Activated CD8-positive, alpha-beta T cell treated with anti-CD3 and anti-CD28 coated beads, Interleukin-2, amount 10 ng/mL, durations not matched to agents 7 days and 5 days (primary cell): ENCODE measurements at regions of chr3 and their contacts with region 1.

Region 1: GRCh38 chr3:197960694-197961581 is 921 bp downstream of the LMLN start:
- DNase-seq: no peak
- ATAC-seq: no peak
- H3K4me3 Mint-ChIP-seq: peak overlapping the region; percentile 91
- H3K27ac Mint-ChIP-seq: peak overlapping the region; percentile 93
- H3K4me1 Mint-ChIP-seq: peaks cover 54% of the 10 kb centered on the region
- H3K27me3 Mint-ChIP-seq: no peaks in the 10 kb centered on the region

Region 2: DNA sequence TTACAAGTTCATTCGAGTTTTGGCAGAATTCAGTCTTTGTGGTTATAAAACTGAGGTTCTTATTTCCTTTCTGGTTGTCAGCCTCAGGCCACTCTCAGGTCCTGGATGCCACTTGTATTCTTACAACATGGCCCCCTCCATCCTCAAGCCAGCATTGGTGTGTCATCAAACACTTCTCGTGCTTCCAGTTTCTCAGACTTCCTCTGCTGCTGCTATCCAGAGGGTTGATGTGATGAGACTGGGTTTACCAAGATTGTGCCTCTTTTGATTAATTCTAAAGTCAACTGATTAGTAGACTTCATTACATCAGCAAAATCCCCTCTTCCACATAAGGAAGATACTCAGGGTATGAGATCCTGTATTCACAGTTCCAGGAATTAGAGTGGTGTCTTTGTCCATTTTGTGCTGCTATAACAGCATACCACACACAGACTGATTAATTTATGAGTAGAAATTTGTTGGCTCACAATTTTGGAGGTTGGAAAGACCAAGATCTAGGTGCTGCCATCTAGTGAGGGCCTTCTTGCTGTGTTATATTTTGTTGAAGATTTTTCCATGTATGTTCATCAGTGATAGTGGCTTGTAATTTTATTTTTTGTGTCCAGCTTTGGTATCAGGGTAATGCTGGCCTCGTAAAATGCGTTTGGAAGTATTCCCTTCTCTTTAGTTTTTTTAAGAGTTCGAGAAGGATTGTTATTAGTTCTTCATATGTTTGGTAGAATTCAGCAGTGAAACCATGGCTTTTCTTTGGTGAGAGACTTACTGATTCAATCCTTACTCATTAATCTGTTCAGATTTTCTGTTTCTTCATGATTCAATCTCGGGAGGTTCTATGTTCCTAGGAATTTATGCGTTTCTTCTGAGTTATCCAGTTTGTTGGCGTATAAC is 158.8 kb before region 1 on chr3:
- CTCF ChIA-PET with region 1: no interaction called
- POLR2A ChIA-PET with region 1: no interaction called
- DNase-seq: peak; percentile 62
- ATAC-seq: peak; percentile 77
- H3K4me3 Mint-ChIP-seq: peak overlapping the region; percentile 37
- H3K27ac Mint-ChIP-seq: peak overlapping the region; percentile 78
- H3K4me1 Mint-ChIP-seq: peaks cover 45% of the 10 kb centered on the region
- H3K27me3 Mint-ChIP-seq: no peaks in the 10 kb centered on the region

Region 3: GRCh38 chr3:197942956-197943556 is 17.9 kb before region 1 on chr3:
- CTCF ChIA-PET with region 1: interaction called, 12 read pairs
- POLR2A ChIA-PET with region 1: no interaction called
- DNase-seq: peak; percentile 60
- ATAC-seq: peak; percentile 76
- H3K4me3 Mint-ChIP-seq: no peak overlapping the region
- H3K27ac Mint-ChIP-seq: no peak overlapping the region
- H3K4me1 Mint-ChIP-seq: peaks cover 7% of the 10 kb centered on the region
- H3K27me3 Mint-ChIP-seq: no peaks in the 10 kb centered on the region

Region 4: DNA sequence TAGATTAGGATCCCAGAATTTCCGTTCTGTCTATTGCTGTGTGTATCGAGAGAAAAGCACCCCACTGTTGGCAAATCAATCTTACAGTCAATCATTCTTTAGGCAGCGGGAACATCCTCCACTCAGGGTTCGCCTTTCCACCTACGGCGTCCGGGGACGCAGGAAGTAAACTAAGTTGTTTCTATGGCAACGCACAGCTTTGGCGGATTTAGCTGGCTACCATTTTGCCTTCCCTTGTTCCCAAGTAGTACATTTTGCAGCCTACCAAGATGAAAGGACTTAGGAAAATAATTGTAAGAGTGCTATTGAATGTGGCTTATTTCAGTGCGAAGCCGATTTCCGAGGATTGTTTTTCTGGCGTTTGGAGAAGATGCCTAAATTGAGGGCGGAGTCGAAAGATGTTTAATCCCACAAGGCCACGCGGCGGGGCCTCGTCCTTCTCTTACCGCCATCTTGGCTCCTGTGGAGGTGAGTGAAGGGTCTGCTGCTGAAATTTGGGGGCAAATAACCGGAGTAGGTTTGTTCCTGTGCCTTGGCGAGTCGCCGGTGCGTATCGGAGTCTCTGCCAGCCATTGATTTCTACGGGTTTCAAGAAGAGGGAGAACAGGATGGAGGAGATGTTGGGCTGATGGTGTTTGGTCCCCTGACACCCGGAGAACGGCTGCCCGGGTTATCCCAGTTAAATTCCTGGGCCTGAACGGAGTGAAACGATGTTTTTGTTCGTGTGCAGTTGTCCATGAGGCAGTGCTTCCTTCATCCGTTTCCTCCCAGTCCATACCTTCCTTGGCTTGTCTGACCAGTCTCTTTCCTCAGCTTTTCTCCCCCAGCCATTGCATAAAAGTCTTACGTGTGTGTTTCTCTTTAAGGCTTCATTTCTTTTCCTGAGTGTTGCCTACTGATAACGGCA is 10.9 kb before region 1 on chr3 and contains the start of gene RPL35A:
- CTCF ChIA-PET with region 1: interaction called, 5 read pairs
- POLR2A ChIA-PET with region 1: interaction called, 10 read pairs
- DNase-seq: peak; percentile 88
- ATAC-seq: peak; percentile 87
- H3K4me3 Mint-ChIP-seq: peak within 1 kb of the TSS; percentile 96
- H3K27ac Mint-ChIP-seq: peak within 1 kb of the TSS; percentile 98
- H3K4me1 Mint-ChIP-seq: peaks cover 50% of the 10 kb centered on the region
- H3K27me3 Mint-ChIP-seq: no peaks in the 10 kb centered on the region
- total RNA-seq, gene RPL35A: 876 to 907 TPM